AG04450 (cell line): ENCODE measurements at regions of chr1 and their contacts with region 1.

Region 1: GRCh38 chr1:26500488-26501175 is 28.4 kb downstream of the HMGN2 start:
- DNase-seq: peak; percentile 15
- H3K4me3 ChIP-seq: peak overlapping the region; percentile 77
- H3K27ac ChIP-seq: peak overlapping the region; percentile 78
- H3K27me3 ChIP-seq: no peaks in the 10 kb centered on the region
- CTCF ChIP-seq: no peak

Region 2: GRCh38 chr1:26490158-26490557 is 10.5 kb before region 1 on chr1:
- CTCF ChIA-PET with region 1: interaction called, 13 read pairs
- POLR2A ChIA-PET with region 1: interaction called, 3 read pairs
- DNase-seq: no peak
- H3K4me3 ChIP-seq: no peak overlapping the region
- H3K27ac ChIP-seq: no peak overlapping the region
- H3K27me3 ChIP-seq: peaks cover 5% of the 10 kb centered on the region
- CTCF ChIP-seq: no peak

Region 3: GRCh38 chr1:26529655-26530409 is 29.2 kb after region 1 on chr1 and contains the start of gene RPS6KA1:
- CTCF ChIA-PET with region 1: interaction called, 14 read pairs
- POLR2A ChIA-PET with region 1: no interaction called
- DNase-seq: no peak
- H3K4me3 ChIP-seq: peak within 1 kb of the TSS; percentile 62
- H3K27ac ChIP-seq: no peak within 1 kb of the TSS
- H3K27me3 ChIP-seq: no peaks in the 10 kb centered on the region
- CTCF ChIP-seq: no peak
- polyA plus RNA-seq, gene RPS6KA1: 2.8 and 3.4 TPM in 2 replicates

Region 4: DNA sequence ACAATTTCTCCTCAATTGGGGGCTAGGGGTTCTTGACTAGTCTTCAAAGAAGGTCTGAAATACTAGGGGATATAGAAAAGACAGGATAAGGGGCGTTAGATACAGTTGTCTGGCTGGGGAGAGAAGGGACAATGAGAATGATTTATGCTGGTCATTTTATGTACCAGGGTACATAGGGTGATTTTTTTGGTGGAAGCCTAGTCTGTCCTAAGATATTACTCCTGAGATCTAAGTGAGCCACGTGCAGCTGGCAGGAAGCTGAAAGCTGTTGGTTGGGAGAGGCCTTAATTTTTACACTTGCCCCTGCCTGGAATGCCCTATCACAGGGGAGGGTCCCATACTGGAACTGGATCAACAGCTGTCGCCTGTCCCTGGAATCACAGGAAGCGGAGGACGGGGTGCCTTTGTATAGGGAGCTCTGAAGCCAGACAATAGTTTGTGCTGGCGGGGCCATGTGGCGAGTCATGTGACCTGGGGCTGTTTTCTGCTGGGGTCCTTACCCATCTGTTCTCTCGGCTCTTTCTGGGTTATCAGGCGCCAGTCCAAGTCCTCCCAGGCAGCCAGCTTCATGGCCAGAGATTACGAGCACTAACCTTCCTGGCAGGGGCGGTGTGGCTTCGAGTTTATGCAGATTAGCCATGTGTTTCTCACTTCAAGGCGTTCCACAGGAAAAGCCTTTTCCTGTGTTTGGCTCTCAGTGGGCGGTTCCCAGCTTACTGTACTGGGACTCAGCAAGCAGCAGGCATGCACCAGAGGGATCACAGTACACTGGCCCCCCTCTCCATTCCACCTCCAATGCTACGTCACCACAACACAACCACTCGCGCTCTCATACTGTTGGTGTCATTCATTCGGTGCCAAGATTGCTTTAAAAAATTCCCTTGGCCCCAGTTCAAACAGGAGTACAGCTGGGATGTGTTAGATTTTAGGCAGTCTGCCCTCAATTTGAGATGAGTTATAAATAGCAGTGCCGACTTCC is 222.7 kb after region 1 on chr1:
- CTCF ChIA-PET with region 1: no interaction called
- POLR2A ChIA-PET with region 1: no interaction called
- DNase-seq: peak; percentile 96
- H3K4me3 ChIP-seq: no peak overlapping the region
- H3K27ac ChIP-seq: peak overlapping the region; percentile 68
- H3K27me3 ChIP-seq: no peaks in the 10 kb centered on the region
- CTCF ChIP-seq: no peak

Region 5: GRCh38 chr1:26833432-26834405 is 333.1 kb after region 1 on chr1:
- CTCF ChIA-PET with region 1: no interaction called
- POLR2A ChIA-PET with region 1: no interaction called
- DNase-seq: no peak
- H3K4me3 ChIP-seq: no peak overlapping the region
- H3K27ac ChIP-seq: no peak overlapping the region
- H3K27me3 ChIP-seq: no peaks in the 10 kb centered on the region
- CTCF ChIP-seq: no peak